Dorsolateral prefrontal cortex (tissue), 120 donors: ENCODE measurements at regions of chr2 and their contacts with region 1.

Region 1: GRCh38 chr2:100786297-100786658 is 33.7 kb upstream of the NPAS2 start:
- DNase-seq: peak in 8 of 10 donors; percentile 17 to 68 (median 57)
- H3K4me3 ChIP-seq: no peak overlapping the region
- H3K27ac ChIP-seq: peak overlapping the region in 45 of 59 donors; percentile 4 to 82 (median 55)
- H3K27me3 ChIP-seq: no peaks in the 10 kb centered on the region
- CTCF ChIP-seq: no peak

Region 2: GRCh38 chr2:100529900-100530299 is 256.4 kb before region 1 on chr2:
- intact Hi-C with region 1: no loop called
- DNase-seq: no peak
- H3K4me3 ChIP-seq: no peak overlapping the region
- H3K27ac ChIP-seq: no peak overlapping the region
- H3K27me3 ChIP-seq: no peaks in the 10 kb centered on the region
- CTCF ChIP-seq: no peak

Region 3: DNA sequence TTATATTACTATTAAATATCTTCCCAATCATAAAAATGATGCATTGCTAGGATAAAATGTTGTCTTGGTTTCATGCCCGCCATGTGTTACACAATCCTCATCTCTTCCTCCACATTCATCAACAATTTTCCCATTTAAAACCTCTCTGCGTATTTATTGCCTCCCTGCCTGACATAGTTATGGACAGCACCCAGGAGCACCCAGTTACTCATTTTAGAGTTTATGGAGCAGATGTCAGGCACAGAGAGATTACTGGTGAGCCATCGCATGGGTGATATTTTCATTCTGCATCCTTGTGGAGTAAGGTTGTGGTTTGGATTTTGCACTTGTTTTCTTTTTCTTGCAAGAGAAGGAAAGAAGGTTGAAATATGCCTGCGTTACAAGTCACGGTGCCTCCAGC is 83.1 kb before region 1 on chr2:
- intact Hi-C with region 1: loop called in 1 of 2 experiments (anchors 10 kb)
- DNase-seq: no peak
- H3K4me3 ChIP-seq: no peak overlapping the region
- H3K27ac ChIP-seq: peak overlapping the region in 27 of 59 donors; percentile 4 to 79 (median 53)
- H3K27me3 ChIP-seq: no peaks in the 10 kb centered on the region
- CTCF ChIP-seq: no peak